A673 (cell line): ENCODE measurements at regions of chr2 and their contacts with region 1.

Region 1: DNA sequence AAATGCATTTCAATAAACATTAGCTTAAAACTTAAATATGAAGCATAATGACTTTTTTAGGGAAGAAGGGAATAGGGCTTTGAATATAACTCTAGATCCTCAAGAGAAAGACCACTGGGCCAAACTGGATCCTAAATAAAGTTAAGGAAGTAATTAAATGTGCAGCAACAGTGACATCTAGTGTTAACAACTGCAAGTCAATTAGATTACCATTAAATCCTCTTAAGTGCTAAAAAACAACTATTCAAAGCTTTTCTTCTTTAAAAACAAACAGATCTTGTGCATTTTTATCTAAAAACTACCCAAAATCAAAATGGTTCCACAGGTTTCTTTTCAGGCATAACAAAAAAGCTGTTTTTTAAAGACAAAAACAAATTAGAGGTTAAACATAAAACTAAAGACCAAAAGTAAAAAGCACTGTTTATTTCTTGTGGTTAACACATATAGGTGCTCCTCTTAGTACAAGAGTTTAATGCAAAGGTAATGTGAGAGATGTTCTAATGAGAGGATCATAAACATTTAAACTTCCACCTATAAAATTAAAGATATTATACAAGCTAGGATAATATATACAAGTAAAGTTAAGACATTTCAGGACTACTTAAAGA is 111.4 kb downstream of the THADA start:
- DNase-seq: peak; percentile 85
- H3K4me3 ChIP-seq: no peak overlapping the region
- H3K27ac ChIP-seq: no peak overlapping the region
- H3K4me1 ChIP-seq: no peaks in the 10 kb centered on the region
- H3K27me3 ChIP-seq: no peaks in the 10 kb centered on the region
- CTCF ChIP-seq: peak; percentile 70

Region 2: DNA sequence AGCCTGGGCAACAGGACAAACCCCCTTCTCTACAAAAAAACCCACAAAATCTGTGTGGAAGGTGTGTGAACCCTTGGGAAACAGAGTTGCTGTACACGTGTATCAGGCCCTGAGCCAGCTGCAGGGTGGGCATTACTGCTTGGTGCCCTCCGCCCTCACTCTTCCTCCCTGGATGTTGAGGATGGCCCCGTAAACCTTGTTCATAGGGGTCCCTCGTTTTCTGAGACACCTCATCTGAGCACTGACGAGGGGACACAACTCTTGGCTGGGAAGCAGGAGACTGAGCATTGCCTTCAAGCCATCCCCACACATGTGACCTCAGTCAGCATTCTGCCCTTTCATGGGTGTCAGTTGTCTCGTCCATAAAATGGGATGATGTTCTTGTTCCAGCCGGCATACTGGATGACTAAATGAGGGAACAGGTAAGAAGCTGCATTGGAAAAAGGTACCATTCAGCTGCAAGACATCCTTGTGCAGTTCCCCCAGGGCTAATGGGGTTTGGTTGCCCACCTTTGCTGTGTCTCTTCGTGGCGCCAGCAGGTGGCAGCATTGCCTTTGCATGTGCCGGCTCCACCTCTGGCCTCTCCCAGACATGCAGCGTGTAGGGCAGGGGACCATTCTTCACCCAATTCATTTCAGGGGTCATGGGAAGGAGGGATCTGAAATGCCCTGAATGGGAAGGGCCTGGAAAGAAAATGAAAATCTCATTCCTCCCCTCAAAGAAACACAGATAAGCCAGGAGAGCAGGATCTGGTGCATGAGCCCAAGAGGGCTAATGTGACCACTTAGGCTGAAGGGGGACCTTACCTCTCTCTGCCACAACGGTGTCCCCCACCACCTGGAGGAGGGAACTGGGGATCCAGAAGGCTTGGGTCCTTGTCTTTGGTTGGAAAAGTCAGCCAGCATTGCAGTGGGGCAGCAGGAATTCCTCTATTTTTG is 655.7 kb before region 1 on chr2:
- CTCF ChIA-PET with region 1: no interaction called
- POLR2A ChIA-PET with region 1: no interaction called
- intact Hi-C with region 1: loop called (anchors 5 kb)
- DNase-seq: peak; percentile 72
- H3K4me3 ChIP-seq: no peak overlapping the region
- H3K27ac ChIP-seq: no peak overlapping the region
- H3K4me1 ChIP-seq: peaks cover 25% of the 10 kb centered on the region
- H3K27me3 ChIP-seq: no peaks in the 10 kb centered on the region
- CTCF ChIP-seq: peak; percentile 95

Region 3: GRCh38 chr2:42859006-42859552 is 625.3 kb before region 1 on chr2:
- CTCF ChIA-PET with region 1: no interaction called
- POLR2A ChIA-PET with region 1: no interaction called
- intact Hi-C with region 1: loop called (anchors 10 kb)
- DNase-seq: peak; percentile 84
- H3K4me3 ChIP-seq: no peak overlapping the region
- H3K27ac ChIP-seq: no peak overlapping the region
- H3K4me1 ChIP-seq: no peaks in the 10 kb centered on the region
- H3K27me3 ChIP-seq: no peaks in the 10 kb centered on the region
- CTCF ChIP-seq: peak; percentile 94

Region 4: DNA sequence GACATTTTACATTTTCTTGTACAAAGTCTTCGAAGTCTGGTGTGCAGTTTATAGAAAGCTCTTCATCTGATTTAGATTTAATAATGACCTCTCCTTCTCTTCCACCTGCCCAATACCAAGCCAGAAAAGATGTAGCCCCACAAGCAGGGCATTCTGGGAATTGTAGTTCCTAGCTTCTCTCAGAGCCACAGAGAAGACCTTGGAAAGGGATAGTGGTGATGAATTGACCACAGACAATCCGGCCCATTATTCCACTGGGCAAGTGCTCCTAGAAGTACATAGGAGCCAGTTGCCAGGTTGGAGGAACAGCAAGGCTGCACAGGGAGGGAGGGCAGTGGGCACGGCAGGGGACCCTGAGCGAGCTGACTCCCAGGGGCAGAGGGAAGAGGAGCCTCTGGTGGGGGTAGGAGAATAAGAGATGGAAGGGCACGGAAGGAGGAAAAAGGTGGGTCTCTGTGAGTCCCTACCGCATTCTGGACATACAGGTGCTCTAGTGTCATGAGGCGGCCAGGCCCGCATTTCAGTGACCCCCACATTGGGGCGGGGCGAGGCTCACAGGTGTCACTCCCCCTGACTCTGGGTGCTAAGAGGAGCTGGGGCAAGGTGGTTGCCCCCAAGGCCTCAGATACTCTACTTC is 539.5 kb before region 1 on chr2:
- CTCF ChIA-PET with region 1: interaction called, 9 read pairs
- POLR2A ChIA-PET with region 1: no interaction called
- intact Hi-C with region 1: loop called (anchors 5 kb)
- DNase-seq: peak; percentile 39
- H3K4me3 ChIP-seq: no peak overlapping the region
- H3K27ac ChIP-seq: no peak overlapping the region
- H3K4me1 ChIP-seq: no peaks in the 10 kb centered on the region
- H3K27me3 ChIP-seq: no peaks in the 10 kb centered on the region
- CTCF ChIP-seq: no peak

Region 5: GRCh38 chr2:42974721-42975717 is 509.4 kb before region 1 on chr2:
- CTCF ChIA-PET with region 1: interaction called, 3 read pairs
- POLR2A ChIA-PET with region 1: no interaction called
- intact Hi-C with region 1: loop called (anchors 2 kb)
- DNase-seq: peak; percentile 76
- H3K4me3 ChIP-seq: peak overlapping the region; percentile 41
- H3K27ac ChIP-seq: no peak overlapping the region
- H3K4me1 ChIP-seq: no peaks in the 10 kb centered on the region
- H3K27me3 ChIP-seq: no peaks in the 10 kb centered on the region
- CTCF ChIP-seq: peak; percentile 95

Region 6: GRCh38 chr2:43024515-43025011 is 459.9 kb before region 1 on chr2:
- CTCF ChIA-PET with region 1: interaction called, 3 read pairs
- POLR2A ChIA-PET with region 1: no interaction called
- intact Hi-C with region 1: loop called (anchors 1 kb)
- DNase-seq: peak; percentile 64
- H3K4me3 ChIP-seq: no peak overlapping the region
- H3K27ac ChIP-seq: no peak overlapping the region
- H3K4me1 ChIP-seq: no peaks in the 10 kb centered on the region
- H3K27me3 ChIP-seq: no peaks in the 10 kb centered on the region
- CTCF ChIP-seq: peak; percentile 88

Region 7: DNA sequence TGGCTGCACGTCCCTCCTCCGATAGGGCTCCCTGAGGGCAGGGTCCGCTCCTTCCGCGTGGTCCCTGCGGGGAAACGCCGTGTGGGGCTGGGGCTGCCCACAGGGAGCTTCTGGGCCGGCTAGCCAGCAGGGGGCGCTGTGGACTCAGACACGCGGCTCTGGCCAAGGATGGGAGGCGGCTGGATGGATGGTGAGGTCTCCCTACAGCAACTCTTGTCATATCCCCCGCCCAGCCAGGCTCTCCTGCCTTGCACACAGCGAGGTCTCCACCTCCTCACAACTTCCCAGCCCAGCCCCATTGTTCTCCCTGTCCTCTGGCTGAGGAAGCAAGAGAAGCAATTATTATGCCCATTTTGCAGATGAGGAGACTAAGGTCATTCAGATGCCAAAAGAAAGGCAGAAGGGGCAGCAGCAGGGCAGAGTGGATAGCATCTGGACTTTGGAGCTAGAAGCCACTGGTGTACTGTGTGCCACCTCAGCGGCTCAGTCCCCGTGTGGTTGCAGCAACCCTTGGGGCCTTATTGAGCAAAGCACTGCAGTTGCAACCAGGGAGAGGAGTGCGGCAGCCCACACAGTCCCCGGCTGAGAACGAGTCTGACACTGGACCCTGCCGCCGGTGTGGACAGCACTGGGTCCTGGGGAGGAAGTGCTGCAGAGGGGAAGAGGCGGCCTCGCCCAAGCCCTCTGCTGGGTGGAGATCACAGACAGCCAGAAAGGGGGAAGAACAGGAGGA is 357.1 kb before region 1 on chr2:
- CTCF ChIA-PET with region 1: no interaction called
- POLR2A ChIA-PET with region 1: no interaction called
- intact Hi-C with region 1: loop called (anchors 1 kb)
- DNase-seq: peak; percentile 68
- H3K4me3 ChIP-seq: no peak overlapping the region
- H3K27ac ChIP-seq: no peak overlapping the region
- H3K4me1 ChIP-seq: no peaks in the 10 kb centered on the region
- H3K27me3 ChIP-seq: no peaks in the 10 kb centered on the region
- CTCF ChIP-seq: peak; percentile 82